Tibial artery (tissue), 4 donors: ENCODE measurements at regions of chr1 and their contacts with region 1.

Region 1: DNA sequence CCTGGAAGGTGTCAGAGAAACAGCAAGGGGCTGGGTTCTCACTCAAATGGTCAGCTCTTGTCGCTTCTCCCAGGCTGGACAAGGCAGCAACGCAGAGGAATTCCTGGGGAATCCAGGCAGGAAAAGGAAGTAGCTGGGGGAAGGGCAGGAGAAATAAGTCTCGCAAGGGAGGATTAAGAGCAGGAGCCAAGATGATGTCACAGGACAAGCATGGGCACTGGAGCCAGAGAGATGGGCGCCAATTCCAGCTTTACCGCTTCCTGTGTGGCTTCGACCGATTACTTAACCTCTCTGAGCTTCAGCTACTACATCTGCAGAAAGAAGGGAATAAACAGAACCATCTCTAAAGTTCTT is 70.5 kb downstream of the SSBP3 start:
- DNase-seq: peak; percentile 78 to 86
- H3K4me3 ChIP-seq: peak overlapping the region; percentile 29 to 41
- H3K27ac ChIP-seq: peak overlapping the region; percentile 79 to 82
- H3K4me1 ChIP-seq: peaks cover 0 to 80% (median 69%) of the 10 kb centered on the region in 4 donors
- H3K27me3 ChIP-seq: no peaks in the 10 kb centered on the region
- CTCF ChIP-seq: no peak

Region 2: DNA sequence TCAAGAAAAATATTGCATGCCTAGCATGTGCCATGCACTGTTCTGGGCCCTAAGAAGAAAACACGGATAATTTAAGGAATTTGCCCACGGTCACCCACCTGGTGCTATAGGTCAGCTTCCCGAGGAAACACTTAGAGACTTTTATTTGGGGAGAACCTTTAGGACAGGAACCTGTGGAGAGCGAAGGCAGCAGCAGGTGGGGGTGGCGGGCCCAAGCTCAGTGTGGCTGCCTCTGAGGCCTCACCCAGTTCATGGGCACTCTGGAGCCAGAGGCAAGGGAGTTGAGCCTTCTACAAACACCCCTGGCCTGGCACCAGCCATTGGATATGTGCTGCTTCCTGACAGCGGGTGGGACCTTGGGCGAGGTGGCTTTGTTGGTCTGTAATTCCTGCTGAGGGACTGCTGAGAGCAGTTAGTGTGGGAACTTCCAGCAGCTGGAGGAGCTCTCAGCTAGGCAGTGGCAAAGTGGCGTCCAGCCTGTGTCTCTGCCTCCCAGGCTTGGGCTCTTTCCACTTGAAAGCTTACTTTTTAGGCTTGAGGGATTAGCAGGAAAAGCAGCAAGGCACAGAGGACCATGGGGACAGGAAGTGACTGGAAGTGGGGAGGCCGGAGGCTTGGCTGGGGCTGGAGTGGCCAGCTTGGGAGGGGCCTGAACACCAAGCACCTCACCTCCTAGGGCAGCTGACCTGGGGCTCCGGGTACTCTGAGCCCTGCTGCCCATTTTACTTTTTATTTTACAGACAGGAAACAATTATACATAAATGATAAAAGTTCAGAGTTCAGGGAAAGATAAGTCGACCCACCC is 116.6 kb before region 1 on chr1:
- intact Hi-C with region 1: no loop called
- DNase-seq: no peak
- H3K4me3 ChIP-seq: no peak overlapping the region
- H3K27ac ChIP-seq: peak overlapping the region; percentile 25 to 63
- H3K4me1 ChIP-seq: peaks cover 0 to 30% (median 18%) of the 10 kb centered on the region in 4 donors
- H3K27me3 ChIP-seq: no peaks in the 10 kb centered on the region
- CTCF ChIP-seq: no peak

Region 3: DNA sequence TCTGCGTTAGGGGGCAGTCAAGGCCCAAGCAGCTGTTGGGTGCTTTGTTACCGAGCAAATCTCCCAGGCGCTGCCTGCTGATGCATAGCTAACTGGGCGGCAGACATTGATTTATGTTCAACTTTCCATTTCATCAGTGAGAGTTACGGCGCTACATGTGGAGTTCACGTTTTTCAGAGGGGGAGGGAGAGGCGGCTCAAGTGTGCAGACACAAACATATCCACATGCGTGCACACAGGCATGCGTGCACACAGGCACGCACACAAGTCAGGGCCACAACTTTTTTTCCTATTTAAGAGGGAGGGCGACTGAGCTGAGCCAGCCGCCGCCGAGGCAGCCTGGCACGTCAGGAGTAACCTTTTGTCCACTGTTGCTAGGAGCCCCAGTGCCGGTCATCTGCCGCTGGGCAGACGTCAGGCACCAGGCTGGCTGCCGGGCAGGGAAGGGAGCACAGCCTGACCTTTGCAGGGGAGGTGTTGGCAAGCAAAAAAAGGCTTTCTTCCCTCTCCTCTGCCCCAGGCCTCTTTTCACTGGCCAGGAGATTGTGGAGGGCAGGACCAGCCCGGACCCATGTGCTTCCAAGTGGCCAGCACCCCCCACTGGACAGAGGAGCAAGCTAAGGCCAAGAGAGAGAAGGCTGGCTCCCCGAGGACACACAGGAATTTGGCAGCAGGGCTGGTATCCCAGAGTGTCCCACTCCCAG is 62.5 kb before region 1 on chr1:
- intact Hi-C with region 1: loop called (anchors 10 kb)
- DNase-seq: peak; percentile 80 to 97
- H3K4me3 ChIP-seq: peak overlapping the region in 1 of 2 donors; percentile 26
- H3K27ac ChIP-seq: peak overlapping the region; percentile 87 to 98
- H3K4me1 ChIP-seq: peaks cover 23 to 100% (median 82%) of the 10 kb centered on the region in 4 donors
- H3K27me3 ChIP-seq: no peaks in the 10 kb centered on the region
- CTCF ChIP-seq: peak; percentile 68 to 73

Region 4: GRCh38 chr1:54542120-54542961 is 206.6 kb after region 1 on chr1:
- intact Hi-C with region 1: no loop called
- DNase-seq: peak in 1 of 2 donors; percentile 85
- H3K4me3 ChIP-seq: peak overlapping the region; percentile 56 to 61
- H3K27ac ChIP-seq: peak overlapping the region; percentile 77 to 87
- H3K4me1 ChIP-seq: peaks cover 0 to 27% (median 17%) of the 10 kb centered on the region in 4 donors
- H3K27me3 ChIP-seq: no peaks in the 10 kb centered on the region
- CTCF ChIP-seq: peak; percentile 7 to 16

Region 5: DNA sequence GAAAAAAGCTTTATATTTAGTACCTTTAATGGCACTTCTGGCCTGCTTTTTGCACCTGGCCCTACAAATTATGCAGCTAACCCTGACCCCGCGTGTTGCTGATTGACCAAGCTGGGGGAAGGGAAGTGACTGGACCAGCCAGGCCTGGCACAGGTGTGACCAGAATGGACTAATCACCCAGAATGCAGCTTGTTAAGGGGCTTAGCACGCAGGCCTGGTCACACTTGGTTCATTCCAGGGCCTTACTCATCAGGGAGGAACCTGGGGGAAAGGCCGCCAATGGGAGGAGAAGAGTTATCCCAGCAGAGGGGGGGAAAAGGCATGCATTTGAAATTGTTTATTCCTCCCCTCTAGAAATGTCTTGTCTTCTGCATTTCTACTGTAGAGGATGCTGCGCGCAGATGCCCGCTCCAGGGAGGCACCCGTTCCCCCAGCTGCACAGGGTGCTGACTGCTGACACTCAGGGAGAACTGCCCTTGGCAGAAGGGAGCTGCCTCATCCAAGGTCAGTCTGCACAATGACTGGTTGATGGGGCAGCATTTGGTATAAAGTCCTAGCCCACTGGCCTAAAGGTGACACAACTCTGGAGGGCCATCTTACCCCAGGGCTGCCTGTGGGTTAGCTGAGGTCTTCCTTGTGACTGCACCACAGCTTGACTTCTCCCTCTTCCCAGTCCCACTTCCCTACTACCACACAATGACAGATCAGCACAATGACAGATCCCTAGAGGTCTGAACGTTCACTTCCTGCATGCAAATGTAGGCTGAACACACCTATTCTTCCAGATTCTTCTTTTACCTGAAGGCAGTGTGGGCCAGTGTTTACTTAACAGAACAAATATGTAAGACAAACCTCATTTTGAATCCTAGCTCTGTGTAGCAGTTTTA is 522.3 kb after region 1 on chr1:
- intact Hi-C with region 1: no loop called
- DNase-seq: peak in 1 of 2 donors; percentile 46
- H3K4me3 ChIP-seq: no peak overlapping the region
- H3K27ac ChIP-seq: no peak overlapping the region
- H3K4me1 ChIP-seq: no peaks in the 10 kb centered on the region
- H3K27me3 ChIP-seq: no peaks in the 10 kb centered on the region
- CTCF ChIP-seq: no peak